Activated B cell treated with CpG ODN at 0.5 μM for 24 hours (primary cell): ENCODE measurements at regions of chr1 and their contacts with region 1.

Region 1: GRCh38 chr1:110034451-110035235 is at the start of gene STRIP1:
- DNase-seq: peak; percentile 81
- ATAC-seq: peak; percentile 92
- H3K4me3 Mint-ChIP-seq: peak within 1 kb of the TSS; percentile 93
- H3K27ac Mint-ChIP-seq: peak within 1 kb of the TSS; percentile 90
- H3K4me1 Mint-ChIP-seq: peaks cover 41% of the 10 kb centered on the region
- H3K27me3 Mint-ChIP-seq: no peaks in the 10 kb centered on the region
- CTCF ChIP-seq: no peak
- total RNA-seq, gene STRIP1: 60.4 and 77.3 TPM in 2 replicates

Region 2: GRCh38 chr1:109493805-109494539 is 540.7 kb before region 1 on chr1 and contains the start of gene CYB561D1:
- CTCF ChIA-PET with region 1: no interaction called
- POLR2A ChIA-PET with region 1: interaction called, 3 read pairs
- intact Hi-C with region 1: loop called (anchors 5 kb)
- DNase-seq: peak; percentile 95
- ATAC-seq: peak; percentile 89
- H3K4me3 Mint-ChIP-seq: peak within 1 kb of the TSS; percentile 98
- H3K27ac Mint-ChIP-seq: peak within 1 kb of the TSS; percentile 91
- H3K4me1 Mint-ChIP-seq: peaks cover 43% of the 10 kb centered on the region
- H3K27me3 Mint-ChIP-seq: no peaks in the 10 kb centered on the region
- CTCF ChIP-seq: peak; percentile 81
- total RNA-seq, gene CYB561D1: 17.1 and 18.1 TPM in 2 replicates

Region 3: GRCh38 chr1:110011527-110012041 is 23.1 kb before region 1 on chr1:
- CTCF ChIA-PET with region 1: interaction called, 36 read pairs
- POLR2A ChIA-PET with region 1: interaction called, 21 read pairs
- intact Hi-C with region 1: loop called (anchors 1 kb)
- DNase-seq: no peak
- ATAC-seq: peak; percentile 90
- H3K4me3 Mint-ChIP-seq: peak overlapping the region; percentile 75
- H3K27ac Mint-ChIP-seq: peak overlapping the region; percentile 99
- H3K4me1 Mint-ChIP-seq: peaks cover 37% of the 10 kb centered on the region
- H3K27me3 Mint-ChIP-seq: no peaks in the 10 kb centered on the region
- CTCF ChIP-seq: peak; percentile 55

Region 4: DNA sequence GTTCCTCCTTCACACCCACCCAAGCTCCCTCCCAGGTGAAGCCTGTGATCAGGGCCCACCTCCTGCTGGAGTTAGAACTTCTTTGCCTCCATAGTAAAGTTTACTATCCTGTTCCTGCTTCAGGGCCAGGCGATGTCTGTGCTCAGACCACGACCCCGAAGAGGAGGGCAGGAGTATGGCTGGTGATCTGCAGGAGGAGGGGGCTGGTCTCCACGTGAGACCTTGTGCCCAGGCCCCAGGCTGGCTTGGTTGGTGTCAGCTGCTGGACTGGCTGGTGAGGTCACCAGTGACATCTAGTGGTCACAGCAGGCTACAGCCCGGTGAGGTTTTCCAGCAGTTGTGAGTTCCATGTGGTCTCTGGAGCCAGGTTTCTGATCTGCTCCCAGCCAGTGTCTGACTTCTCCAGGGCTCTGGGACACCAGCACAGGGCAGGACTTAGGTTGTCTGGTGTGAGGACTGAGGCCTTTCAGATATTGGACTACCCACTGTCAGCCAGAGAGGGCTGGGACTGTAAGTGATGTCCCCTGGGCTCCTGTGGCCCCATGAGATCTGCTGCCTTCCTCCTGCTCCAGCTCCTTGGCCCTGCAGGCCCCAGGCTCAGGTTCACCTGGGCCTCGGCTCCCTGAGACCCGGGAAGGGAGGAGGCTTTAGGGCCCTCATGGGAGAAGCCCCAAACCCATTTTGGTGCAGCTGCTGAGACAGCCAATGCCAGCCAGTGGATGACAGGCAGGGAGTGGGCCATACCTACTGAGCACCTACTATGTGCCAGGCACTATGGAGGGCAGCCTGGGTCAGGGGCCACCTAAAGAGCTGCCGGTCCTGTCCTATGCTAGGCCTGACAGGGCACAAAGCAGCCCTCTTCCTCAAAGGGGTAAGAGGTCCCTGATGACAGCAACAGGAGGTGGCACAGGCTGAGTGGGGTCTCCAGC is 71.6 kb after region 1 on chr1:
- CTCF ChIA-PET with region 1: interaction called, 9 read pairs
- POLR2A ChIA-PET with region 1: interaction called, 4 read pairs
- intact Hi-C with region 1: loop called (anchors 1 kb)
- DNase-seq: peak; percentile 51
- ATAC-seq: peak; percentile 88
- H3K4me3 Mint-ChIP-seq: no peak overlapping the region
- H3K27ac Mint-ChIP-seq: no peak overlapping the region
- H3K4me1 Mint-ChIP-seq: peaks cover 16% of the 10 kb centered on the region
- H3K27me3 Mint-ChIP-seq: peaks cover 13% of the 10 kb centered on the region
- CTCF ChIP-seq: peak; percentile 61

Region 5: DNA sequence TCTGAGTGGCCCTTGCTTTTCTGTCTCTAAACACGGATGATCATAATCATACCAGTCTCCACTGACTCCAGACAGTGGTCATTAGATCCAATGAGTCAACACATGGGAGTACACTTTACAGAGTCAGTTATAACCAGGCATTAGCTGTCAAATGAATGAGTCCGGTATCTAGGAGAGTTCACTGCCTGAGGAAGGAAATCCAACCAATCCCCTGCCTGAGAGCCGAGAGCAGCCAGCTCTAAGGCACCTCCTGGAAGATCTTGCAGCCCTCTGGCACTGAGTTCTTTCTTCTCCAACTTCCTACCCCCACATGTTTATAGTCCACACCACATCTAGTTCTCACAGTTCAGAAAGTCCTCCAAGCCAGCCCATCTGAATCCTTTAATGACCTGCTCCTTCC is 275.1 kb after region 1 on chr1:
- CTCF ChIA-PET with region 1: no interaction called
- POLR2A ChIA-PET with region 1: no interaction called
- intact Hi-C with region 1: no loop called
- DNase-seq: no peak
- ATAC-seq: no peak
- H3K4me3 Mint-ChIP-seq: no peak overlapping the region
- H3K27ac Mint-ChIP-seq: no peak overlapping the region
- H3K4me1 Mint-ChIP-seq: peaks cover 3% of the 10 kb centered on the region
- H3K27me3 Mint-ChIP-seq: no peaks in the 10 kb centered on the region
- CTCF ChIP-seq: no peak

Region 6: GRCh38 chr1:110495926-110496600 is 461.4 kb after region 1 on chr1:
- CTCF ChIA-PET with region 1: interaction called, 4 read pairs
- POLR2A ChIA-PET with region 1: no interaction called
- intact Hi-C with region 1: loop called (anchors 1 kb)
- DNase-seq: peak; percentile 50
- ATAC-seq: peak; percentile 86
- H3K4me3 Mint-ChIP-seq: no peak overlapping the region
- H3K27ac Mint-ChIP-seq: no peak overlapping the region
- H3K4me1 Mint-ChIP-seq: no peaks in the 10 kb centered on the region
- H3K27me3 Mint-ChIP-seq: no peaks in the 10 kb centered on the region
- CTCF ChIP-seq: no peak